Adrenal gland (tissue), 19 donors: ENCODE measurements at regions of chr16 and their contacts with region 1.

Region 1: GRCh38 chr16:19410435-19411161 is 7.1 kb upstream of the TMC5 start:
- DNase-seq: peak in 2 of 7 donors; percentile 13 to 21
- H3K4me3 ChIP-seq: peak overlapping the region in 1 of 4 donors; percentile 37
- H3K27ac ChIP-seq: no peak overlapping the region
- H3K4me1 ChIP-seq: peaks cover 0 to 5% of the 10 kb centered on the region in 2 donors
- H3K27me3 ChIP-seq: peaks cover 41% of the 10 kb centered on the region
- CTCF ChIP-seq: peak in 1 of 6 experiments; percentile 16
- POLR2A ChIP-seq: no peak

Region 2: GRCh38 chr16:19474617-19475016 is 64.0 kb after region 1 on chr16:
- intact Hi-C with region 1: loop called in 1 of 2 experiments (anchors 10 kb)
- DNase-seq: no peak
- H3K4me3 ChIP-seq: no peak overlapping the region
- H3K27ac ChIP-seq: no peak overlapping the region
- H3K4me1 ChIP-seq: no peaks in the 10 kb centered on the region
- H3K27me3 ChIP-seq: no peaks in the 10 kb centered on the region
- CTCF ChIP-seq: no peak
- POLR2A ChIP-seq: no peak

Region 3: GRCh38 chr16:19886073-19886941 is 475.7 kb after region 1 on chr16:
- intact Hi-C with region 1: no loop called
- DNase-seq: peak; percentile 70 to 92 (median 79)
- H3K4me3 ChIP-seq: peak overlapping the region in 1 of 4 donors; percentile 89
- H3K27ac ChIP-seq: no peak overlapping the region
- H3K4me1 ChIP-seq: peaks cover 5 to 19% of the 10 kb centered on the region in 2 donors
- H3K27me3 ChIP-seq: no peaks in the 10 kb centered on the region
- CTCF ChIP-seq: peak; percentile 99 to 100 (median 100)
- POLR2A ChIP-seq: peak in 1 of 2 donors; percentile 32